OCI-LY7 (cell line): ENCODE measurements at regions of chr2 and their contacts with region 1.

Region 1: DNA sequence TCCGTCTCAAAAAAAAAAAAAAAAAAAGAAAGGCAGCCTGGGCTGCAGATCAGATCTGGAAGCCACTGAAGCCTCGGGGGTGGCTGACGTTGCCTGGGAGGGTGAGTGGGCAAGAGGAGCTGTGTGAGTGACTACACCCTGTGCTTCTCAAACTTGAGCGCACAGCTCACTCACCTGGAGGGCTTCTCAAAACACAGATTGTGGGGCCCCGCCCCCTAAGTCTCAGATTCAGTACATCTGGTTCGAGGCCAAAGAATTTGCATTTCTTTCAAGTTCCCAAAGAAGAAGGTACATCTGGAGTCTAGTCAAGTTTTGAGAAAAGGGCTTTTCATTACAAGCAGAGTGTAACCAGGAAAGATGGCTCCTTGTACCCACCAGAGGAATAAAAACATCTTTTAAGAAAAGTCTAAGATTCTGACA is 97.7 kb upstream of the CAB39 start:
- DNase-seq: peak; percentile 96
- H3K4me3 ChIP-seq: peak overlapping the region; percentile 45
- H3K27ac ChIP-seq: peak overlapping the region; percentile 57
- H3K4me1 ChIP-seq: peaks cover 26% of the 10 kb centered on the region
- CTCF ChIP-seq: peak; percentile 26; the same call in 1 of the 2 replicates

Region 2: GRCh38 chr2:229800997-229801754 is 813.7 kb before region 1 on chr2:
- CTCF ChIA-PET with region 1: no interaction called
- POLR2A ChIA-PET with region 1: no interaction called
- intact Hi-C with region 1: loop called (anchors 5 kb)
- DNase-seq: peak; percentile 72
- H3K4me3 ChIP-seq: no peak overlapping the region
- H3K27ac ChIP-seq: no peak overlapping the region
- H3K4me1 ChIP-seq: no peaks in the 10 kb centered on the region
- CTCF ChIP-seq: peak; percentile 91

Region 3: DNA sequence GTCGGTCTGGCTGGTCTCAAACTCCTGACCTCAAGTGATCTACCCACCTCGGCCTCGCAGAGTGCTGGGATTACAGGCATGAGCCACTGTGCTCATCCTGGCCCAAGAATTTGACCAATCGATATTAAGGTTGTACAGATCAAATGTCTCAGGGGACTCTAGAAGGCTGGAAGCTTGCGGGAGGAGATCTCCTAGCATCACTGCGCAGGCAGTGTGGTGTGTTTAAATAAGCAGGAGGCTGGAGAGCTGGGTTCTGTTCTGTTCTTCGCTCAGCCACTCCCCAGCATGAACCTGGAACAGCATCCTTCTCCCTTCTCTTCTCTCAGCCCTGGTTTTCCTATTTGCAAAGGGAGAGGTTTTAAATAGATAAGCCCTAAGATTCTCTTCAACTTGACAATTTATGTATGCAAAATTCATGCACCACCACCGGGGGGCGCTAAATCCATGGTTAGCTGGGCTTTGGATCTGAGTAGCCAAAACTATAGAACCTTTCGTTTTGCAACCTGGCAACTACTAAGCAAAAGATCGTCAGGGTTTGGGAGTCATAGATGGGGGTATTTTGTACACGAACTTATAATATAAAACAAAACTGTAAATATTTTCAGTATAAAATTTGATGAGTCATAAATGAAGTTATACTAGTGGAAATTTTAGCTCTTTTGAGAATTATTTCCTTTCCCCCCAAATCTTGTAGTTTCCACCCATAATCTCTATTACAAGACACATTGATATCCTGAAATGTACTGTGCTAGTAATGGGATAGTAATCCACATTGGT is 606.8 kb before region 1 on chr2:
- CTCF ChIA-PET with region 1: no interaction called
- POLR2A ChIA-PET with region 1: no interaction called
- intact Hi-C with region 1: loop called (anchors 1 kb)
- DNase-seq: peak; percentile 62
- H3K4me3 ChIP-seq: no peak overlapping the region
- H3K27ac ChIP-seq: no peak overlapping the region
- H3K4me1 ChIP-seq: no peaks in the 10 kb centered on the region
- CTCF ChIP-seq: peak; percentile 94

Region 4: GRCh38 chr2:230068016-230068650 is 546.8 kb before region 1 on chr2:
- CTCF ChIA-PET with region 1: no interaction called
- POLR2A ChIA-PET with region 1: no interaction called
- intact Hi-C with region 1: loop called (anchors 1 kb)
- DNase-seq: no peak
- H3K4me3 ChIP-seq: peak overlapping the region; percentile 24
- H3K27ac ChIP-seq: no peak overlapping the region
- H3K4me1 ChIP-seq: peaks cover 14% of the 10 kb centered on the region
- CTCF ChIP-seq: no peak

Region 5: GRCh38 chr2:230798769-230799399 is 184.0 kb after region 1 on chr2:
- CTCF ChIA-PET with region 1: interaction called, 5 read pairs
- POLR2A ChIA-PET with region 1: interaction called, 3 read pairs
- intact Hi-C with region 1: loop called (anchors 1 kb)
- DNase-seq: peak; percentile 70
- H3K4me3 ChIP-seq: no peak overlapping the region
- H3K27ac ChIP-seq: no peak overlapping the region
- H3K4me1 ChIP-seq: peaks cover 27% of the 10 kb centered on the region
- CTCF ChIP-seq: peak; percentile 98